Heart right ventricle (tissue), 16 donors: ENCODE measurements at regions of chr11 and their contacts with region 1.

Region 1: GRCh38 chr11:34438529-34439507 is at the start of gene CAT:
- DNase-seq: peak; percentile 98
- ATAC-seq: peak; percentile 98 to 100 (median 99)
- H3K4me3 ChIP-seq: peak within 1 kb of the TSS; percentile 58 to 97 (median 79)
- H3K27ac ChIP-seq: peak within 1 kb of the TSS; percentile 76 to 97 (median 92)
- H3K4me1 ChIP-seq: peaks cover 7 to 51% (median 44%) of the 10 kb centered on the region in 9 donors
- H3K27me3 ChIP-seq: no peaks in the 10 kb centered on the region
- CTCF ChIP-seq: no peak
- total RNA-seq, gene CAT: 45.5 to 134 (median 87.1) TPM

Region 2: GRCh38 chr11:34051349-34052035 is 387.3 kb before region 1 on chr11 and contains the start of gene CAPRIN1:
- intact Hi-C with region 1: loop called in 1 of 10 experiments (anchors 1 kb)
- DNase-seq: peak; percentile 88 to 89
- ATAC-seq: peak; percentile 89 to 96 (median 93)
- H3K4me3 ChIP-seq: peak within 1 kb of the TSS; percentile 77 to 99 (median 94)
- H3K27ac ChIP-seq: peak within 1 kb of the TSS; percentile 97 to 100 (median 100)
- H3K4me1 ChIP-seq: peaks cover 11 to 43% (median 37%) of the 10 kb centered on the region in 9 donors
- H3K27me3 ChIP-seq: no peaks in the 10 kb centered on the region
- CTCF ChIP-seq: no peak
- total RNA-seq, gene CAPRIN1: 103 to 142 (median 120) TPM

Region 3: DNA sequence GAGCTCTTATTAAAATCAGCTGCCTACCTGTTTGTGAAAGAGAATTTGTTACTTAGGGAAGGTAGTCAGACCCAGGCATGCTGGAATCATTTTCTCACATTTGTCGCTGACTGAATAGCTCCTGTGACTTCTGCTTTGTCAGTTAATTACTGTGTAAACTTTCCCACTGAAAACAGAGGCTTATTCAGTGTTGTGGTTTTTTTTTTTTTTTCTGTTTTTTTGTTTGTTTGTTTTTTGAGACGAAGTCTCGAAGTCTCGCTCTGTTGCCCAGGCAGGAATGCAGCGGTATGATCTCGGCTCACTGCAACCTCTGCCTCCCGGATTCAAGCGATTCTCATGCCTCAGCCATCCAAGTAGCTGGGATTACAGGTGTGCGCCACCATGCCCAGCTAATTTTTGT is 1499.4 kb after region 1 on chr11:
- intact Hi-C with region 1: loop called in 1 of 10 experiments (anchors 5 kb)
- DNase-seq: no peak
- ATAC-seq: no peak
- H3K4me3 ChIP-seq: no peak overlapping the region
- H3K27ac ChIP-seq: no peak overlapping the region
- H3K4me1 ChIP-seq: peaks cover 0 to 11% (median 3%) of the 10 kb centered on the region in 9 donors
- H3K27me3 ChIP-seq: peaks cover 0 to 19% (median 6%) of the 10 kb centered on the region in 7 donors
- CTCF ChIP-seq: no peak